ENCODE measurements at regions of chr7 and their contacts with region 1.

Region 1: DNA sequence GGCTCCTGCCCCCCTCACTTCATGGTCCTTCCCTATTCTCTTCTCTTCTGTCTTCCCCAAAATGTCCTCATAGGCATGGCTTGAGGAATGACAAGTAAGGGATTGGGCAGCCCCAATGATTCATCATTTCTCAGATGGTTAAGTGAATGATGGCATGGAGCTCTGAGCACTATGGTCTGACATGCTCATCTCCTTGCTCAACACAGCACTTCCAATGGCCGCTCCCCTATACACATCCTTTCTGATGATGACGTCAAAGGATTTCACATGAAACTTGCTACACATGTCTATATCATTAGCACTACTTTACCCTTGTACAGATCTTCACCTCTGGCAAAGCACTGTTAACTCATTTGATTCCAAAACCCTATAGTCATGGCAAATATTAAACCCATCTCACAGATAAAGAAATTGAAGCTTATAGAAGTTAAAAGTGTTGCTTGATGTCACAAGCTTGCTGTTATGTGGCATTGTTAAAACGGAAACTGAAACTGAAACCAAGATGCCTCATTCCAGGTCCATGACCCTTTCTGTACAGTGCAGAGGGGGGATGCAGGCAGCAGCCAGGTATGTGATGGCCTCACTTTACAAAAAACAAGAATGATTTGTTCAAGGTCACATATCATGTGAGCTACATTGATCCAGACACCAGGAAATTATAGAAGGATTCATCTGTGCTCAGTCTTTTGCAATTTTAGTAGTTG is 90.0 kb upstream of the PLXNA4 start:
- DNase-seq: no peak
- H3K4me3 ChIP-seq: no peak overlapping the region
- H3K27ac ChIP-seq: no peak overlapping the region
- H3K4me1 ChIP-seq: no peaks in the 10 kb centered on the region
- H3K27me3 ChIP-seq: no peaks in the 10 kb centered on the region
- CTCF ChIP-seq: no peak
- EP300 ChIP-seq: no peak
- POLR2A ChIP-seq: no peak
- RAD21 ChIP-seq: no peak

Region 2: GRCh38 chr7:132654150-132654549 is 12.1 kb before region 1 on chr7:
- CTCF ChIA-PET with region 1: interaction called, 11 read pairs
- POLR2A ChIA-PET with region 1: interaction called, 3 read pairs
- DNase-seq: peak in 1 of 2 experiments; percentile 40
- H3K4me3 ChIP-seq: no peak overlapping the region
- H3K27ac ChIP-seq: no peak overlapping the region
- H3K4me1 ChIP-seq: peaks cover 3 to 10% (median 4%) of the 10 kb centered on the region in 4 experiments; a peak in 6 of 7 replicates
- H3K27me3 ChIP-seq: no peaks in the 10 kb centered on the region
- CTCF ChIP-seq: peak in 2 of 3 experiments; percentile 51 to 65; a peak in 3 of 4 replicates
- EP300 ChIP-seq: no peak
- POLR2A ChIP-seq: no peak
- RAD21 ChIP-seq: peak; percentile 41 to 59

Region 3: DNA sequence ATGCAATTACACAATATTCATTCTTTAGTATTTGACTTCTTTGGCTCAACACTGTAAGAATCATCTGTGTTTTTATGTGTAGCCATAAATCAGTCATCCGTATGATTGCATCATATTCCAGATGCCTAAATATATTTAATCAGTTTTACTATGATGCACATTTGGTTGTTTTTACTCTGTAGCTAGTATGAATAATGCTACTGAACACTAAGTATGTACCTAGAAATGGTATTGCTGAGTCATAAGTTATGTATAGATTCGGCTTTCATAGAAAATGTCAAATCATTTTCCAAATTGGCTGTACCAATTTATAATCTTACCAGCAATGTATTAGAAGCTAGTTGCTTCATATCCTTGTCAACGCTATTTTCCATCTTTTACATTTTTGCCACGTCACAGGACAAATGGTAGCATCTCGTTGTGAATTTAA is 107.3 kb after region 1 on chr7:
- CTCF ChIA-PET with region 1: no interaction called
- POLR2A ChIA-PET with region 1: no interaction called
- DNase-seq: no peak
- H3K4me3 ChIP-seq: no peak overlapping the region
- H3K27ac ChIP-seq: no peak overlapping the region
- H3K4me1 ChIP-seq: peaks cover 0 to 4% (median 2%) of the 10 kb centered on the region in 4 experiments; a peak in 2 of 7 replicates
- H3K27me3 ChIP-seq: no peaks in the 10 kb centered on the region
- CTCF ChIP-seq: no peak
- EP300 ChIP-seq: no peak
- POLR2A ChIP-seq: no peak
- RAD21 ChIP-seq: no peak

Measured in H1 (cell line).